Sigmoid colon (tissue), 7 donors: ENCODE measurements at regions of chr10 and their contacts with region 1.

Region 1: GRCh38 chr10:132464253-132465192 is 67.5 kb downstream of the PWWP2B start:
- DNase-seq: peak; percentile 98
- H3K4me3 ChIP-seq: no peak overlapping the region
- H3K27ac ChIP-seq: peak overlapping the region; percentile 91 to 99 (median 95)
- H3K4me1 ChIP-seq: peaks cover 0 to 64% (median 61%) of the 10 kb centered on the region in 4 donors
- H3K27me3 ChIP-seq: no peaks in the 10 kb centered on the region
- CTCF ChIP-seq: no peak
- EP300 ChIP-seq: peak in 2 of 4 donors; percentile 47 to 82
- POLR2A ChIP-seq: no peak

Region 2: DNA sequence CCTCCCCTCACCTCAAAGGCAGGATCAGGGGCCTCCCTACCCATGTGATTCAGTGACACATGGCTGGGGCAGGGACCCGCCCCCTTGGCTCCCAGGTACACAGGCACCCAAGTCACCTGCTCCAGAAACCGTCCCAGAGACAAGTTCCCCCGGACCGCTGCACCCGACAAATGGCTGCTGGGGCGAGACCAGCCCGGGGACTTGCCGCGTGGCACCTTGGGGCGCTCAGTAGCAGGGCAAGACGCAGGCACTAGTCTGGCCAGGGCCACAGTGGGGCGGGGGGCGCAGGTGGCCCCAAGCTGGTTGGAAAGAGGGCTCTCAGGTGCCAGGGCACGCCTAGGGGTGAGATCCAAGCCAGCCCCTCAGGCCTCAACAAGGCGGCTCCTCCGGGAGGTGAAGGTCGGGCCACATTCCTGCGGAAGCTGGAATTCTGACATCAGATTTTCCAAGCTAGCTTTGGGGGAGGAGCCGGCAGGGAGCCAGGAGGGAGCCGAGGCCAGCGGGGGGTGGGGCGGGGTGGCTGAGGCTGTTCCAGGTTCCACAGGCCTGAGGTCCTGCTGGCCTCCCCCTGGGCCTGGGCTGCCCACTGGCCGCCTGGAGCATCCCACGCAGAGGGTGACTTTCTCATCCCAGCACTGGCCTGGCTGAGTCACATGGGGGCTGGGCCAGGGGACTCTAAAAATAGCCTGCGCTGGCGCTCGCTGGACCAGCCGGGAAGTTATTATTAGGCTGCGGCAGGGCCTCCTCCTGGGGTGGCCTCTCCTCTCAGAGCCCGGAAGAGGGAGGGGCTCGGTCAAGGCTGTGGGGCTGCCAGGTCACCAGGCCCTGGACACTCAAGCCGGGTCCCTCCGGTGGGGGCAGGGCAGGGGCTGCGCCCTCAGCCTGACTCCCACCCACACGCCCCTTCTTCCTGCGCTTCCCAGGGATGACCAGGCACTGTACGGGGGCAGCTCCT is 52.5 kb after region 1 on chr10:
- intact Hi-C with region 1: loop called (anchors 5 kb)
- DNase-seq: peak; percentile 99
- H3K4me3 ChIP-seq: peak overlapping the region in 3 of 4 donors; percentile 7 to 32 (median 8)
- H3K27ac ChIP-seq: peak overlapping the region; percentile 80 to 94 (median 90)
- H3K4me1 ChIP-seq: peaks cover 0 to 64% (median 59%) of the 10 kb centered on the region in 4 donors
- H3K27me3 ChIP-seq: no peaks in the 10 kb centered on the region
- CTCF ChIP-seq: no peak
- EP300 ChIP-seq: peak in 2 of 4 donors; percentile 35 to 69
- POLR2A ChIP-seq: no peak

Region 3: GRCh38 chr10:132528064-132528691 is 63.7 kb after region 1 on chr10:
- intact Hi-C with region 1: no loop called
- DNase-seq: peak; percentile 65
- H3K4me3 ChIP-seq: no peak overlapping the region
- H3K27ac ChIP-seq: peak overlapping the region; percentile 17 to 49 (median 36)
- H3K4me1 ChIP-seq: peaks cover 0 to 11% (median 4%) of the 10 kb centered on the region in 4 donors
- H3K27me3 ChIP-seq: no peaks in the 10 kb centered on the region
- CTCF ChIP-seq: no peak
- EP300 ChIP-seq: no peak
- POLR2A ChIP-seq: no peak